ENCODE measurements at regions of chr14 and their contacts with region 1.

Region 1: DNA sequence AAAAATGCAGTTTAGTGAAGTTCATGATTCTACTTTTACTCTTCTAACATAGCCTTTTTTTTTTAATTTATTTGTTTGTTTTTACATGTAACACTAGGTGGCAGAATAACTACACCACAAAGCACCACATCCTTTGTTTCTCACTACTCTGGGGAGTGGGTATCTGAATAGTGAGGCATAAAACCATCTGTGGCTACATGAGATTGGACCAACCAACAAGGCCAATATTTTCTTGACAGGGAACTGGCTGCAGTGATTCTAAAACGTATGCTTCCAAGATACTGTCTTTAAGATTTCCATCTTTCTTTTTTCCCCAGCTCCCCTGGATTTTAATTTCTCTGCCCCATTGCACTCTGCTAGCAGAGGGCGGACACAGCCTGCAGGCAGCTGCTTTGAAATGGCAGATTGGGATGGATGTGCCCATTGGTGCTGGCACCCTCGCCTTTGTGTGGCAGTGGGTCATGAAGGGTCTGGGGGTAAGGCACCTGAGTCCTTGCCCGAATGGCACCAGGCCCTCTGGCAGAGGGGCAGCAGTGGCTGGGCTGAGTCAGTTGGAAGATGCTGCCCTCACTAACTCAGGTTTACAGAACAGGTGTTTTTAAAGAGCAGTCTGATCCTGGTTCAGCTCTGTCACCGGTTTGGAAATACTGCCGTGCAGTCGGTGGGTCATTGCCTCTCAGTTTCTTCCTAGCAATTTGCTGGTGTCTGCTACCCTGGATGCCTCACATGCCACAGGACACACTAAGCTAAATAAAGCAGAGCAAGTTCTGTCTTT is 429.1 kb downstream of the RAD51B start:
- DNase-seq: no peak
- H3K4me3 ChIP-seq: no peak overlapping the region
- H3K27ac ChIP-seq: peak overlapping the region; percentile 75
- H3K4me1 ChIP-seq: peaks cover 21% of the 10 kb centered on the region
- H3K27me3 ChIP-seq: no peaks in the 10 kb centered on the region
- CTCF ChIP-seq: peak; percentile 49

Region 2: GRCh38 chr14:67636361-67636919 is 612.2 kb before region 1 on chr14:
- intact Hi-C with region 1: no loop called
- DNase-seq: no peak
- H3K4me3 ChIP-seq: no peak overlapping the region
- H3K27ac ChIP-seq: no peak overlapping the region
- H3K4me1 ChIP-seq: no peaks in the 10 kb centered on the region
- H3K27me3 ChIP-seq: no peaks in the 10 kb centered on the region
- CTCF ChIP-seq: no peak

Region 3: DNA sequence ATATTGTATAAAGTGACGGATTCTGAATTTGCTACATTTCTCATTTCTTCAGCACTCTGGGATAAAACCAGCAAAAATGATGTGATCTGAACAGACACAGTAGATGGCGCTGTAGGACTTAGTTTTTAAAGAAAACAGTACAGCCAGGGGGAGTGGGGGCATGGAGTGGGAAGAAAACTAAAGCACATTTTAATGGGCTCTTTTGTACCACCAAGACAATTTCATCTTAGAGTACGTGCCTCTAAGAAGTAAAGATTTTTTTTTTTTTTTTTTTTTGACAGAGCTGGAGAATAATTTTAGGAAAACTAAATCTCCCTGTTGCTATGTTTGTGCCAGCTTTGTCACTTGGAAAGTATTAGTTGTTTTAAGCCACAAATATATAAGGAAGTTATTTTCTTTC is 304.7 kb before region 1 on chr14:
- intact Hi-C with region 1: loop called (anchors 5 kb)
- DNase-seq: peak; percentile 86
- H3K4me3 ChIP-seq: no peak overlapping the region
- H3K27ac ChIP-seq: no peak overlapping the region
- H3K4me1 ChIP-seq: peaks cover 4% of the 10 kb centered on the region
- H3K27me3 ChIP-seq: no peaks in the 10 kb centered on the region
- CTCF ChIP-seq: peak; percentile 55

Region 4: DNA sequence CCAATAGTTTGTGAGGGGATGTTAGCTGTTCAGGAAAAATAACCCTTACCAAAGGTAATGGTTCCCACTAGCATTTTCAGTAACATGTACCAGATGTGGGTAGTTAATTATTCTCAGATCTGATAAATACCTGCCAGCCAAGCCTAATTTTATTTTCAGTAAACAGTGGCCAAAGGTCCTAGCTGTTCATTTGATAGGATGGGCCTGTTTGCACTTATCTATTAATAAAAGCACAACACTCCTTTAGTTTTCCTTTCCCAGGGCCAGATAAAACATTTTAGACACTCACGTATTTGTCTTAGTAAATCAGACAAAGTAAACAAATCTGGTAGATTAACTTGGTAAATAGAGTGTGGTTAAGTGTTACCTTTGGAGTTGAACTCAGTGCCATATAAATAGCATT is 84.0 kb before region 1 on chr14:
- intact Hi-C with region 1: no loop called
- DNase-seq: no peak
- H3K4me3 ChIP-seq: no peak overlapping the region
- H3K27ac ChIP-seq: peak overlapping the region; percentile 36
- H3K4me1 ChIP-seq: no peaks in the 10 kb centered on the region
- H3K27me3 ChIP-seq: no peaks in the 10 kb centered on the region
- CTCF ChIP-seq: no peak

Region 5: DNA sequence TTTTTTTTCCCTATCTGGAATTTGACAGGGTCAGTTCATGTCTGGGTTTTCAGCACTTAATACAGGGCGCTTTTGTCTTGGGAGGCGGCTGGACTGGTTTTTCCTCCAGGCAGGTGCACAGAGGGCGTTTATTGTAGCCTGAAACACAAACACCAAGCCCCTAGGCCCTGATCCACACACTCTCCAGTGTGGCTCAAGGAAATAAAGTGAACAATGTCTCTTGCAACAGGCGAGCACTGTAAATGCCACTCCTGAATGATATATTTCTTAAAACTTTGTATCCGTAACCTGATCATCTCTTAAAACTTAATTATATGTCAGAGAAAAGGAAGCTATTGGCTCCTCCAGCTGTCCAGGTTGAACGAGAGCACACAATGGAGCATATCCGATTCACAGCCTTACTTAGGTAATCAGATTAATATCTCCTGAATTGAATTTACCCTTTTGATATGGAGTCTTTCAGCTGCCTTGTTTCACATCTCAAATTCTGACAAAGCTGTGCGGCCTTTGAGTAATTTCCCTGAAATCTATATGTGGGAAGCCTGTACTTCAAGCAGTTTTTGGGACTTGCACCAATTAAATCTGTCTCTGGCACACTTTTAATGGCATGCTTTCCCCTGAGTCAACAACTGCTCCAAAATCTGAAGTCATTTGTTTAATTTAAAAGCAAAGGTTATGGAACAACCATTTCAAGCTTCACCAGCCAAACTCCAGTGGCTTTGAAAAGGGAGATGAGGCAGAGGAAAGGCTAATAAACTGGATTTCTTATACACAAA is 58.5 kb after region 1 on chr14:
- intact Hi-C with region 1: loop called (anchors 10 kb)
- DNase-seq: peak; percentile 74
- H3K4me3 ChIP-seq: no peak overlapping the region
- H3K27ac ChIP-seq: peak overlapping the region; percentile 56
- H3K4me1 ChIP-seq: peaks cover 3% of the 10 kb centered on the region
- H3K27me3 ChIP-seq: no peaks in the 10 kb centered on the region
- CTCF ChIP-seq: no peak

Region 6: DNA sequence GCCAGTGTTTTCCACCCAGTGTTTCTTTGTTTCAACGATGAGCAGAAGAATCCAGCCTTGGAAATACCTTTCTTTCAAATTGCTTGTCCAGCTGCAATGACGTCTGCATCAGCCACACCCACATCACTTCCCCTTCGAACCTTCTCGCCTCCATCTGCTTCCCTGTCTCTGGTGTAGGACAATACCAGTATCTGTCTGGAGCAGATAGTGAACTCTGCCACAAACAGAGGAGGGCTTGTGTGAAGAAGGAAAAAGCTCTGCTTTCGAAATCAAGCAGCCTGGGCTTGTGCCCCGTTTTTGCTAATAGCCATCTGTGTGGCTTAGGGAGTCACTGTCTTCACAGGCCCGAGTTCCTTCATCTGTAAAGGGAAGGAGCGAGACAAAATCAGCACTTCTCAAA is 128.8 kb after region 1 on chr14:
- intact Hi-C with region 1: no loop called
- DNase-seq: peak; percentile 79
- H3K4me3 ChIP-seq: no peak overlapping the region
- H3K27ac ChIP-seq: peak overlapping the region; percentile 56
- H3K4me1 ChIP-seq: no peaks in the 10 kb centered on the region
- H3K27me3 ChIP-seq: no peaks in the 10 kb centered on the region
- CTCF ChIP-seq: no peak

Region 7: GRCh38 chr14:68788996-68789820 is 540.5 kb after region 1 on chr14:
- intact Hi-C with region 1: loop called (anchors 10 kb)
- DNase-seq: peak; percentile 89
- H3K4me3 ChIP-seq: peak overlapping the region; percentile 74
- H3K27ac ChIP-seq: peak overlapping the region; percentile 100
- H3K4me1 ChIP-seq: no peaks in the 10 kb centered on the region
- H3K27me3 ChIP-seq: no peaks in the 10 kb centered on the region
- CTCF ChIP-seq: peak; percentile 47

Region 8: GRCh38 chr14:68816262-68816942 is 567.7 kb after region 1 on chr14:
- intact Hi-C with region 1: loop called (anchors 2 kb)
- DNase-seq: peak; percentile 91
- H3K4me3 ChIP-seq: peak overlapping the region; percentile 47
- H3K27ac ChIP-seq: peak overlapping the region; percentile 99
- H3K4me1 ChIP-seq: peaks cover 10% of the 10 kb centered on the region
- H3K27me3 ChIP-seq: no peaks in the 10 kb centered on the region
- CTCF ChIP-seq: peak; percentile 95